ENCODE measurements at regions of chr5 and their contacts with region 1.

Region 1: DNA sequence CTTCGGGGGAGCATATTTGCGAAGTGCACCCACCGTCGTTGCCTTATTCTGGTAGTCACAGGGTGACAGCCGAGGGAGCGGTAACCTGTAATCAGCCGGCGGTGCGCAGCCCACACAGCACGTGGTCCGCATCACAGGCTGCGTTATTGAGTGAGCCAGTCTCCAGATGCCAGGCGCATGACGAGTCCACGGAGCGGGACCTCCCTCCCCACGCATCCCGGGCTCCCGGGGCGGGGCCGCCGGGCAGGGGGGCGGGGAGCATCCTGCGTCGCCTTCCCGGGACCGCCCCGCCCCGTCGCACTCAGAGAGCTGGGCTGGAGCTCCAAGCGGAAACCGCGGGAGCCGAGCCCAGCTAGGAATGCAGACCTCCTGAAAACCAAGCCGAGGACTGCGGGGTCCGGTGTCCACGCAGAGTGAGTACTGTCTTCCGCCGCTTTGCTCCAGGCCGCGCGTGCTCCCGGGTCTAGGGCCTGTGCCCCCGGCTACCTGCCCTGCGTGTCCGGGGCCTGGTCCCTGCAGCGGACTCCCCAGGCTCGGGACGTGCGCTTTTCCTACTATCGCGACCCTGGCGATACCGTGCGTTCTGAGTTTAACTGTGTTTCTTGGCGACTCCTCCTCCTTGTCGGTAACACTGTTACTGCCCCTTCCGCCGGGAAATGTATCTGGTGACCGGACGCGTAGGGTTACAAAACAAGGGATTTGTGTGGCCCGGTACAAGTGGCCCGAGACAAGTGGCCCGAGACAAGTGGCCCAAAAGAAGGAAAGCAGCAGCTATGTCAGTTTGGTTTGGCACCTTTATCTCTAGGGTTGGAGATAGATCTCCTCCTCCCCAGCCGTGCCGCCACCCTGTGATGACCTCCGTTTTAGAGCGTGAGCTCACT is 40.6 kb downstream of the CAST start:
- DNase-seq: peak; percentile 67 to 88
- ATAC-seq: peak; percentile 82 to 91 (median 83)
- H3K4me3 ChIP-seq: peak overlapping the region; percentile 46
- H3K4me3 Mint-ChIP-seq: peak overlapping the region; percentile 93
- H3K27ac ChIP-seq: peak overlapping the region; percentile 77
- H3K27ac Mint-ChIP-seq: peak overlapping the region; percentile 90 to 98
- H3K4me1 ChIP-seq: peaks cover 22% of the 10 kb centered on the region
- H3K4me1 Mint-ChIP-seq: peaks cover 48 to 53% of the 10 kb centered on the region in 2 donors
- H3K27me3 ChIP-seq: no peaks in the 10 kb centered on the region
- H3K27me3 Mint-ChIP-seq: no peaks in the 10 kb centered on the region
- CTCF ChIP-seq: no peak

Region 2: DNA sequence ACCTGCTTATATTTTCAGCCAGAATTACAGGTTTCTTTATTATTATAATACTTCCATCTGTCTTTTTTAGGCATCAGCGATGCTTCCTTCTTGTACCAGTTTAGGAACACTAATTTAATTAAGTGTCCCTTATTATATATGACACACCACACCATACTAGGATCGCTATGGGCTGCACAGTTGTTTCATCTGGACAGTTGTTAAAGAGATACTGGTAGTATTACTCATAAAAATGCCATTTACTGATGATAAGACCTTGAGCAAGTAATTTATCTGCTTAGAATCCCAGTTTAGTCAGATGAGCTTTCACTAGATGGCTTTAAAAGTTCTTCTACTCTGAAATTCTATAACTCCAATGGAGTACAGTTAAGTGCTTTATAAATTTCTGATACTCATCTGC is 1130.7 kb before region 1 on chr5:
- intact Hi-C with region 1: no loop called
- DNase-seq: no peak
- ATAC-seq: no peak
- H3K4me3 ChIP-seq: no peak overlapping the region
- H3K4me3 Mint-ChIP-seq: no peak overlapping the region
- H3K27ac ChIP-seq: no peak overlapping the region
- H3K27ac Mint-ChIP-seq: no peak overlapping the region
- H3K4me1 ChIP-seq: no peaks in the 10 kb centered on the region
- H3K4me1 Mint-ChIP-seq: no peaks in the 10 kb centered on the region
- H3K27me3 ChIP-seq: no peaks in the 10 kb centered on the region
- H3K27me3 Mint-ChIP-seq: no peaks in the 10 kb centered on the region
- CTCF ChIP-seq: no peak

Region 3: GRCh38 chr5:96662725-96663513 is 39.8 kb before region 1 on chr5:
- intact Hi-C with region 1: loop called (anchors 1 kb)
- DNase-seq: peak; percentile 82 to 88
- ATAC-seq: peak; percentile 64 to 81 (median 68)
- H3K4me3 ChIP-seq: peak overlapping the region; percentile 83
- H3K4me3 Mint-ChIP-seq: peak overlapping the region; percentile 95
- H3K27ac ChIP-seq: peak overlapping the region; percentile 96
- H3K27ac Mint-ChIP-seq: peak overlapping the region; percentile 98 to 99
- H3K4me1 ChIP-seq: peaks cover 33% of the 10 kb centered on the region
- H3K4me1 Mint-ChIP-seq: peaks cover 74 to 80% of the 10 kb centered on the region in 2 donors
- H3K27me3 ChIP-seq: no peaks in the 10 kb centered on the region
- H3K27me3 Mint-ChIP-seq: no peaks in the 10 kb centered on the region
- CTCF ChIP-seq: no peak

Region 4: GRCh38 chr5:96714951-96715451 is 12.3 kb after region 1 on chr5:
- intact Hi-C with region 1: loop called (anchors 1 kb)
- DNase-seq: peak; percentile 30 to 79
- ATAC-seq: peak; percentile 79 to 82 (median 81)
- H3K4me3 ChIP-seq: no peak overlapping the region
- H3K4me3 Mint-ChIP-seq: no peak overlapping the region
- H3K27ac ChIP-seq: peak overlapping the region; percentile 81
- H3K27ac Mint-ChIP-seq: peak overlapping the region; percentile 82 to 89
- H3K4me1 ChIP-seq: peaks cover 25% of the 10 kb centered on the region
- H3K4me1 Mint-ChIP-seq: peaks cover 65 to 71% of the 10 kb centered on the region in 2 donors
- H3K27me3 ChIP-seq: no peaks in the 10 kb centered on the region
- H3K27me3 Mint-ChIP-seq: no peaks in the 10 kb centered on the region
- CTCF ChIP-seq: no peak

Region 5: GRCh38 chr5:96807075-96807654 is 104.4 kb after region 1 on chr5:
- intact Hi-C with region 1: loop called (anchors 5 kb)
- DNase-seq: no peak
- ATAC-seq: no peak
- H3K4me3 ChIP-seq: peak overlapping the region; percentile 73
- H3K4me3 Mint-ChIP-seq: peak overlapping the region; percentile 99
- H3K27ac ChIP-seq: peak overlapping the region; percentile 93
- H3K27ac Mint-ChIP-seq: peak overlapping the region; percentile 99
- H3K4me1 ChIP-seq: peaks cover 36% of the 10 kb centered on the region
- H3K4me1 Mint-ChIP-seq: peaks cover 56 to 57% of the 10 kb centered on the region in 2 donors
- H3K27me3 ChIP-seq: no peaks in the 10 kb centered on the region
- H3K27me3 Mint-ChIP-seq: no peaks in the 10 kb centered on the region
- CTCF ChIP-seq: no peak